ENCODE measurements at regions of chr9 and their contacts with region 1.

Region 1: GRCh38 chr9:99889121-99889520 is 17.3 kb upstream of the STX17 start:
- DNase-seq: no peak
- CTCF ChIP-seq: no peak

Region 2: GRCh38 chr9:99660191-99660708 is 228.9 kb before region 1 on chr9:
- CTCF ChIA-PET with region 1: no interaction called
- POLR2A ChIA-PET with region 1: no interaction called
- DNase-seq: peak; percentile 66
- CTCF ChIP-seq: no peak

Region 3: GRCh38 chr9:99873531-99873930 is 15.6 kb before region 1 on chr9:
- CTCF ChIA-PET with region 1: interaction called, 14 read pairs
- POLR2A ChIA-PET with region 1: no interaction called
- DNase-seq: no peak
- CTCF ChIP-seq: no peak

Measured in GM10248 (cell line).